ENCODE measurements at regions of chr13 and their contacts with region 1.

Region 1: DNA sequence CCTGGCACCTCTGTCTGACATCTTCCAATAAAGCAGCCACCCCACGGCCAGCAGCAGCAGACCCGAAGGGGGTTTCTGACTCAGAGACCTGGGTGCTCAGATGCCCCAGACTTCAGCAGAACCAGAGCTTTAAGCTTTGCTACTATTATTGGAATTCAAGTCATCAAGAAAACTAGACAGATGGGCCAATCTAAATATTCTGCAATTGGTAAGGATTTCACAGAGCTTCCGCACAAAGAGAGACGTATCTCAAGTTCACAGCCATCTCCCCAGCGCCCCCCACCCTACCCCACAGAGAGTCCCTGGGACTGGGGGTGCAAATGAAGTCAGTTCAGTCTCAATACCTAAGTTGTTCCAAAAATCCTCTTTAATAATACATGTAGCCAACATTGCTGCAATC is 38.8 kb downstream of the RAB20 start:
- DNase-seq: no peak
- H3K4me3 Mint-ChIP-seq: no peak overlapping the region
- H3K27ac Mint-ChIP-seq: no peak overlapping the region
- H3K4me1 Mint-ChIP-seq: peaks cover 43% of the 10 kb centered on the region
- H3K27me3 Mint-ChIP-seq: no peaks in the 10 kb centered on the region

Region 2: GRCh38 chr13:110361365-110361911 is 161.3 kb before region 1 on chr13:
- CTCF ChIA-PET with region 1: no interaction called
- POLR2A ChIA-PET with region 1: no interaction called
- DNase-seq: no peak
- H3K4me3 Mint-ChIP-seq: no peak overlapping the region
- H3K27ac Mint-ChIP-seq: no peak overlapping the region
- H3K4me1 Mint-ChIP-seq: no peaks in the 10 kb centered on the region
- H3K27me3 Mint-ChIP-seq: peaks cover 3% of the 10 kb centered on the region

Region 3: GRCh38 chr13:110561344-110562035 is 38.8 kb after region 1 on chr13 and contains the start of gene RAB20:
- CTCF ChIA-PET with region 1: no interaction called
- POLR2A ChIA-PET with region 1: no interaction called
- DNase-seq: peak; percentile 69
- H3K4me3 Mint-ChIP-seq: peak within 1 kb of the TSS; percentile 94
- H3K27ac Mint-ChIP-seq: peak within 1 kb of the TSS; percentile 85
- H3K4me1 Mint-ChIP-seq: peaks cover 33% of the 10 kb centered on the region
- H3K27me3 Mint-ChIP-seq: peaks cover 23% of the 10 kb centered on the region
- total RNA-seq, gene RAB20: 3.2 to 4.1 TPM

Region 4: DNA sequence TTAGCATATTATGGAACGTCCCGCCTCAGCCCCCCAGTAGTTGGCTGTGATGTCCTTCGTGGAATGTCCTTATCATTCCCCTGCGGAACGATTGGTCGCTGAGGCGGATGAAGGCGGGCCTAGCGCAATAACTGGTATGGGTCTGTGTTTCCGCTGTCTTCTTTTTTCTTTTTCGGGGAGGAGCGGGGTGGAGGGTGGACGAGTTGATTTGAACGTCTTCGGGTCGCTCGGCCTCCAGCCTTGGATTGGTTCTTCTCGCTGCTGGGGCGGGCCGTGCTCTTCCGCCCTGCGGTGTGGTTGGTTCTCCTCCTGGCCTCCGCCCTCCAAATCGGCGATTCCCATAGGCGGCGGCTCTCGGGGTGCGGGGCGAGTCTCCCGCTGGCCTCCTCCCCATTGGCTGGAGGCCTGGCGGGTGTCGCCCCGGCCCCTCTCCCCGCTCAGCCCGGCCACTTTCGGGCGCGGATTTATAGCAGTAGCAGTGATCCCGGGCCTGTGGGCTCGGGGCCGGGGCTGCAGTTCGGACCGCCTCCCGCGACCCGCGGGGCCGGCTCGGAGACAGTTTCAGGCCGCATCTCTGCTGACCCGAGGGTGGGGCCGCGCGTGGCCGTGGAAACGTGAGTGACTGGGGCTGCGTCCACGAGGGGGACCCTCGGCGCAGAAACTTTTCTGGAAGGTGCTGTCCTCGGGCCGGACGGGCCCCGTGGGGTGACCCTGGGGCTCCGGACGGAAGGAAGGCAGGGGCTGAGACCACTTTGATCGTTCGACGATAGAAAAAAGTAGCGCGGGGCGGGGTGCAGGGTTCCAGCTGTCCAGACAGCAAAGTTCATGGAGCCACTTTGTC is 192.9 kb after region 1 on chr13:
- CTCF ChIA-PET with region 1: no interaction called
- POLR2A ChIA-PET with region 1: interaction called, 11 read pairs
- DNase-seq: peak; percentile 98
- H3K4me3 Mint-ChIP-seq: peak overlapping the region; percentile 99
- H3K27ac Mint-ChIP-seq: peak overlapping the region; percentile 98
- H3K4me1 Mint-ChIP-seq: peaks cover 30% of the 10 kb centered on the region
- H3K27me3 Mint-ChIP-seq: no peaks in the 10 kb centered on the region